Sigmoid colon (tissue), 7 donors: ENCODE measurements at regions of chr17 and their contacts with region 1.

Region 1: DNA sequence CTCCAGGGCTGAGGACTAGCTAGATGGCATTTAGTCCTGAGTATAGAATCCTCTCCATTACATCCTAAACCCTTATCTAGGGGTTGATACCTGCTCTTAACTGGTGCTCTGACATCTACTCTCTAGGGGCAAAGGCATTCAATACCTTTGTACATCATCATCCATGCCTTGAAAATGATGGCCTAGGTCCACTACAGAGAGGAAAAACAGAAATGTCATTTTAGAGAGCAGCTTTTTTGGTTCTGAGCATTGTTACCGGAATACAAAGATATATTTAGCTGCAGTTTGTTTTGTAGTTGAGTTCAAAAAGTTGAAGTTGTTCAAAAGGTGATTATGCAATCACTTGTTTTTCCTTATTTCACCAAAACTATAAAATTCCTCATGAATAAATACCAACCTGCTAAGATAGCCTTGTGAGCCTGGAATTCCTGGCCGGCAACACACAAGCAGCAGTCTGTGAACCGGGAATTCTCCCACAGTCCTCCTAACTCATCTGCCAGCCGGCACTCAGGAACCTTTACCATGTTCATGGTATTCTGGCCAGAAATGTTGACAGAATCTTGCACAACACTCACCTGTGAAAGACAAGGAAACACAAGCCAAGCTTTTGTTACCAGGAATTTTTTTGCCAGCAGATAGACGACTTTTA is 35.3 kb downstream of the NXPH3 start:
- DNase-seq: no peak
- H3K4me3 ChIP-seq: no peak overlapping the region
- H3K27ac ChIP-seq: peak overlapping the region; percentile 47 to 89 (median 66)
- H3K4me1 ChIP-seq: peaks cover 0 to 58% (median 46%) of the 10 kb centered on the region in 4 donors
- H3K27me3 ChIP-seq: no peaks in the 10 kb centered on the region
- CTCF ChIP-seq: no peak
- EP300 ChIP-seq: no peak
- POLR2A ChIP-seq: no peak

Region 2: GRCh38 chr17:49575579-49576087 is 35.4 kb before region 1 on chr17 and contains the start of gene NXPH3:
- intact Hi-C with region 1: loop called (anchors 5 kb)
- DNase-seq: peak; percentile 89
- H3K4me3 ChIP-seq: peak within 1 kb of the TSS; percentile 81 to 85 (median 84)
- H3K27ac ChIP-seq: peak within 1 kb of the TSS; percentile 85 to 96 (median 90)
- H3K4me1 ChIP-seq: peaks cover 0 to 53% (median 49%) of the 10 kb centered on the region in 4 donors
- H3K27me3 ChIP-seq: no peaks in the 10 kb centered on the region
- CTCF ChIP-seq: peak in 1 of 4 experiments; percentile 62
- EP300 ChIP-seq: no peak
- POLR2A ChIP-seq: no peak
- total RNA-seq, gene NXPH3: 20.2 to 32.6 (median 21.9) TPM